A549 (cell line): ENCODE measurements at regions of chr9 and their contacts with region 1.

Region 1: GRCh38 chr9:72931437-72931836 is 21.4 kb downstream of the ALDH1A1 start:
- DNase-seq: no peak
- ATAC-seq: peak; percentile 23 to 24; a peak in 3 of 6 replicates
- H3K4me3 ChIP-seq: peak overlapping the region; percentile 67
- H3K27ac ChIP-seq: peak overlapping the region; percentile 83 to 90
- H3K4me1 ChIP-seq: peaks cover 100% of the 10 kb centered on the region
- CTCF ChIP-seq: no peak
- EP300 ChIP-seq: no peak
- POLR2A ChIP-seq: no peak
- RAD21 ChIP-seq: no peak

Region 2: DNA sequence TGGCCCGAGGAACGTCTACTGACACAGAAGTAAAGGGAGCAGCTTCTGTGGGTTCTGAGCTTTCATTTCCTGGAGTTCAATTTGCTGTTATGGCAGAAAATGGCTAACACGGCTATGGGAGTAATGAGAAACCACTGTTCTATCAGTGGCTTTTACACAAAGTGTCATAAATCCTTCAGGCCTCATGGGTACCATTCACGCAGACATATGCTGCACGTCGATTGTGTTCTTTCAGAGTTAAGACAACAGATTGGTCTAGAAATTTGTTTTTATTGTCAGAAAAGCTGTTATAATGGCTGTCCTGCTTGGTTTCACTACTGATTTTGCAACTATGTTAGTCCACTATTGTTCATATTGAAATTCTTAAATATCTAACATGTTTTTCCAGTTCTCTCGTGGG is 114.0 kb before region 1 on chr9:
- CTCF ChIA-PET with region 1: no interaction called
- POLR2A ChIA-PET with region 1: no interaction called
- DNase-seq: no peak
- ATAC-seq: no peak
- H3K4me3 ChIP-seq: no peak overlapping the region
- H3K27ac ChIP-seq: no peak overlapping the region
- H3K4me1 ChIP-seq: peaks cover 5% of the 10 kb centered on the region; the same call in 2 of the 3 replicates
- CTCF ChIP-seq: no peak
- EP300 ChIP-seq: no peak
- POLR2A ChIP-seq: no peak
- RAD21 ChIP-seq: no peak

Region 3: GRCh38 chr9:72911816-72912215 is 19.6 kb before region 1 on chr9:
- CTCF ChIA-PET with region 1: interaction called, 11 read pairs
- POLR2A ChIA-PET with region 1: no interaction called
- DNase-seq: peak in 1 of 2 experiments; percentile 31
- ATAC-seq: peak; percentile 1 to 23; a peak in 1 of 6 replicates
- H3K4me3 ChIP-seq: no peak overlapping the region
- H3K27ac ChIP-seq: peak overlapping the region; percentile 49 to 79
- H3K4me1 ChIP-seq: peaks cover 99% of the 10 kb centered on the region
- CTCF ChIP-seq: no peak
- EP300 ChIP-seq: no peak
- POLR2A ChIP-seq: no peak
- RAD21 ChIP-seq: no peak

Region 4: GRCh38 chr9:72917892-72918509 is 13.4 kb before region 1 on chr9:
- CTCF ChIA-PET with region 1: interaction called, 36 read pairs
- POLR2A ChIA-PET with region 1: interaction called, 6 read pairs
- DNase-seq: no peak
- ATAC-seq: no peak
- H3K4me3 ChIP-seq: peak overlapping the region; percentile 18; the same call in 2 of the 3 replicates
- H3K27ac ChIP-seq: peak overlapping the region; percentile 72 to 75
- H3K4me1 ChIP-seq: peaks cover 100% of the 10 kb centered on the region
- CTCF ChIP-seq: no peak
- EP300 ChIP-seq: no peak
- POLR2A ChIP-seq: no peak
- RAD21 ChIP-seq: no peak

Region 5: GRCh38 chr9:72943844-72944462 is 12.5 kb after region 1 on chr9:
- CTCF ChIA-PET with region 1: interaction called, 52 read pairs
- POLR2A ChIA-PET with region 1: interaction called, 13 read pairs
- DNase-seq: peak in 1 of 2 experiments; percentile 70
- ATAC-seq: peak in 1 of 2 experiments; percentile 36; a peak in 3 of 6 replicates
- H3K4me3 ChIP-seq: peak overlapping the region; percentile 67
- H3K27ac ChIP-seq: peak overlapping the region; percentile 88 to 90
- H3K4me1 ChIP-seq: peaks cover 39% of the 10 kb centered on the region; the same call in 2 of the 3 replicates
- CTCF ChIP-seq: no peak
- EP300 ChIP-seq: no peak
- POLR2A ChIP-seq: no peak
- RAD21 ChIP-seq: no peak

Region 6: DNA sequence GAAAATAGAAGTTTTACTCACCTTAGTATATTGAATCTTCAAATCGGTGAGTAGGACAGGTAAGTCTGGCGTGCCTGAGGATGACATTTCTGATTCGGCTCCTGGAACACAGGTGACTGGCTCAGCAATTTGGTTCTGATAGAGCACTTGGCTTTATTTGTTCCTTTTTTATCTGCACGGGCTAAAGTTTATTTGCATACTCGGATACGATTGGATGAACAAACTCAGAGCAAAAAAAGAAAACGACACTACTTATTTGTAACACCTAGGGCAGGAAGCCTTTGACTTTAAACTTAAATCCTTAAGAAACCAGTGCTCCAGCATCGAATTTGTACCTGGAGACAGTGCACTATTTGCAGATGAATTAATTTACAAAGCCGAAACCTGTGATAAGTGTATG is 21.5 kb after region 1 on chr9 and contains the start of gene ALDH1A1:
- CTCF ChIA-PET with region 1: interaction called, 20 read pairs
- POLR2A ChIA-PET with region 1: interaction called, 13 read pairs
- DNase-seq: peak in 1 of 2 experiments; percentile 91
- ATAC-seq: peak; percentile 64 to 65; a peak in 5 of 6 replicates
- H3K4me3 ChIP-seq: peak within 1 kb of the TSS; percentile 67
- H3K27ac ChIP-seq: peak within 1 kb of the TSS; percentile 90 to 91
- H3K4me1 ChIP-seq: peaks cover 23% of the 10 kb centered on the region
- CTCF ChIP-seq: no peak
- EP300 ChIP-seq: no peak; a peak in 1 of 5 replicates
- POLR2A ChIP-seq: peak; percentile 84
- RAD21 ChIP-seq: 0 out of 5 replicates have a peak, but pooled peaks of 1 of the 2 experiments have one; percentile 9
- polyA plus RNA-seq, gene ALDH1A1: 6,119 and 8,617 TPM in 2 replicates

Region 7: DNA sequence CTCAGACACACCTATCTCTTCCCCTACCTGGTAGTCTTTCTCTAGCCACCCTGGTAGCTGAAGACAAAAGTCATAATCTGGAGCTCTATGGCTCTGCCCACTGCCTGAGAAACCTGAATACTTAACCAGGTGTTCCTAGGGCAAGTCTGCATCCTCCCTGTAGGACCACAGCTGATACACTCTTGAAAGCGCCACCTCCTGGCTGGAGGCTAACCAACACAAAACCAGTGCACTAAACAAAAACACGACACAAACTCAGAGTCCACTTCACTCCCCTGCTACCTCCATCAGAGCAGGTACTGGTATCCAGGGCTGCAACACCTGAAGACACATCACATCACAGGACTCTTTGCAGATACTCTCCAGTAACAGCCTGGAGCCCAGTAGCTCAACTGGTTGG is 135.6 kb after region 1 on chr9:
- CTCF ChIA-PET with region 1: interaction called, 10 read pairs
- POLR2A ChIA-PET with region 1: no interaction called
- DNase-seq: no peak
- ATAC-seq: peak in 1 of 2 experiments; percentile 26; a peak in 3 of 6 replicates
- H3K4me3 ChIP-seq: no peak overlapping the region
- H3K27ac ChIP-seq: peak overlapping the region in 1 of 2 experiments; percentile 74; a peak in 4 of 6 replicates
- H3K4me1 ChIP-seq: no peaks in the 10 kb centered on the region; the same call in 2 of the 3 replicates
- CTCF ChIP-seq: no peak
- EP300 ChIP-seq: no peak
- POLR2A ChIP-seq: no peak
- RAD21 ChIP-seq: no peak